ENCODE measurements at regions of chr12 and their contacts with region 1.

Region 1: DNA sequence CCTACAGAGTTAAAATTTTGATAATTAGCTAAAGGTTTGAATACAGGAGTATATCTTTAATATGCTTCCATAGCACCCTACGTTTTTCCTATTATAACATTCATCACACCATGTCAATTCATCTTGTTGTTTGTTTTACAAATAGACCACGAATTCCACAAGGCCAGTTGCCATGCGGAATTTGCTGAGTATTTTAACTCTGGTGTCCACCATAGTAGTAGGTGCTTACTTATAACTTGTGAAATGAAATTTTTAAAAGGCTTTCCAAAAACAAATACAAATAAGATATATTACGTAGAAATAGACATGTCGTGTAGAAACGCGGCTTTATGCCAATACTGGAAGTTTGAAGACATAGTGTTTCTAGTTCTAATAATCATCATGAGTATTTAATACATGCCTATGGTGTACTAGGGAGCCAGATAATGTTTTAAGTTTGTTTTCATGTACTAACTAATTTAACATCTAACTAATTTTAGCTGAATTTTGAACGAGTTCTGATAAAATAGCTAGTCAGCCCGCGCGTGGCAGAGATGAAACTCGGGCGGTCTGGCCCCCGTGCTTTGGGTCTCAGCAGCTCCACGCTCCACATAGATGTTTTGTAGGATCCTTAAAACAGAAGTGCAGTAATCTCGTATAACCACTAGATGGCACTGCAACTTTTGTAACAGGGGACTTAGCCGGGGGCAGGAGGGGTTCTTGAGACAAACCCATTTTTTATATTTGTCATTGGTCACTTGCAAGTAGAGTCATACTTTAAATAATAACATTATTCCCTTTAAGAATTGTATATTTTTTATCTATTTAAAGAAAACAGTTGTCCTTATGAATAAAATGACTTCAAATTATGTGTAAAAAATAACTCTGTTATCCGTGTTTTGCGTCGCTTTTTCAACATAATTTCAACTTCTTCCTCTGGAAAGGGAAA is 10.2 kb downstream of the CD69 start:
- DNase-seq: peak; percentile 63
- H3K4me3 Mint-ChIP-seq: peak overlapping the region; percentile 50
- H3K27ac Mint-ChIP-seq: peak overlapping the region; percentile 83
- H3K4me1 Mint-ChIP-seq: peaks cover 51% of the 10 kb centered on the region
- H3K27me3 Mint-ChIP-seq: no peaks in the 10 kb centered on the region

Region 2: GRCh38 chr12:7989827-7990551 is 1760.6 kb before region 1 on chr12:
- CTCF ChIA-PET with region 1: no interaction called
- POLR2A ChIA-PET with region 1: no interaction called
- intact Hi-C with region 1: no loop called
- DNase-seq: peak; percentile 90
- H3K4me3 Mint-ChIP-seq: peak overlapping the region; percentile 44
- H3K27ac Mint-ChIP-seq: peak overlapping the region; percentile 87
- H3K4me1 Mint-ChIP-seq: peaks cover 40% of the 10 kb centered on the region
- H3K27me3 Mint-ChIP-seq: no peaks in the 10 kb centered on the region

Region 3: DNA sequence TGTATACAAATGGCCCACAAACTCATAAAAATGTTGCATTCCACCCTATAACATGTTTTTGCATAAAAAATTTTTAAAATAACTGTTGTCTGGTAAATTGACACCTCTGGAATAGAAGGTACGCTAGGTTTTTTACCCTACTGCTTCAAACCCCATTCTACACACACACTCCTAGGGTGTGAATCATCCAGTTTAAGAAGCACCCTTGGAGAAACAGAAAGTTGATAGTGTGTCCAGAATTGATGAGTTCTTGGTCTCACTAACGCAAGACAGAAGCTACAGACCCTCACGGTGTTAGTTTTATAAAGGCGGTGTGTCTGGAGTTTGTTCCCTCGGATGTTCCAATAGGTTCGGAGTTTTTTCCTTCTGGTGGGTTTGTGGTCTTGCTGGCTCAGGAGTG is 301.4 kb before region 1 on chr12:
- CTCF ChIA-PET with region 1: no interaction called
- POLR2A ChIA-PET with region 1: no interaction called
- intact Hi-C with region 1: no loop called
- DNase-seq: no peak
- H3K4me3 Mint-ChIP-seq: peak overlapping the region; percentile 97
- H3K27ac Mint-ChIP-seq: no peak overlapping the region
- H3K4me1 Mint-ChIP-seq: peaks cover 13% of the 10 kb centered on the region
- H3K27me3 Mint-ChIP-seq: no peaks in the 10 kb centered on the region

Region 4: DNA sequence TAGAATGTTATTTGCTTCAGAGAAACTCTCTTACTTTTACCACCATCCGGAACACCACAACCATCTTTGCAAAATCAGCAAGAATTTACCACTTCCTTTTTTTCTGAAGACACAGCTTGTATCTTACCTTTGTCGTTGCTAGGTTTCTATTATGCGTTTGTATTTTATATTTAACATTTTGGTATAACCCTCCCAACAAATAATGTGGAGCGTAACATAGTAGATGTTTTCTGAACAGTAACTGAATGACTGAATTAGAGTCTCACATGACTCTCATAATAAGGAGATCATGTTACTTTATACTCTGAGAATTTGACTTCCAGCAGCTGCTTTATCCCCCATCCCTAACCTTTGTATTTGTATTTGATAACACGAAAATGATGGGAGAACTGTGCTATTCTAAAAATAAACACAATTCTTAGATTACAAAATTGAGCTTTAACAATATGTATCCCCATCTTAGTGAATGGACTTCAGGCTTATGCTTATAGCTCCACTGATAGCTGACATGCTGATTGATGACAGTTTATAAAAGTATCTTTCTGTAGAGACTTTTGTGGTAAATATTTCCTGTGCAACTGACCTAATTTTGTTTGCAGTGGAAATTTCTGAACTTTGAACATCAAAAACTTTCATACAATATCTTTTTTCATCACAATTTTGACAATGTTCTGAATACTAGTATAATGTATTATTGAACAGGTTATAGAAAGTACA is 135.0 kb before region 1 on chr12:
- CTCF ChIA-PET with region 1: no interaction called
- POLR2A ChIA-PET with region 1: no interaction called
- intact Hi-C with region 1: no loop called
- DNase-seq: no peak
- H3K4me3 Mint-ChIP-seq: peak overlapping the region; percentile 50
- H3K27ac Mint-ChIP-seq: peak overlapping the region; percentile 77
- H3K4me1 Mint-ChIP-seq: peaks cover 73% of the 10 kb centered on the region
- H3K27me3 Mint-ChIP-seq: no peaks in the 10 kb centered on the region

Region 5: DNA sequence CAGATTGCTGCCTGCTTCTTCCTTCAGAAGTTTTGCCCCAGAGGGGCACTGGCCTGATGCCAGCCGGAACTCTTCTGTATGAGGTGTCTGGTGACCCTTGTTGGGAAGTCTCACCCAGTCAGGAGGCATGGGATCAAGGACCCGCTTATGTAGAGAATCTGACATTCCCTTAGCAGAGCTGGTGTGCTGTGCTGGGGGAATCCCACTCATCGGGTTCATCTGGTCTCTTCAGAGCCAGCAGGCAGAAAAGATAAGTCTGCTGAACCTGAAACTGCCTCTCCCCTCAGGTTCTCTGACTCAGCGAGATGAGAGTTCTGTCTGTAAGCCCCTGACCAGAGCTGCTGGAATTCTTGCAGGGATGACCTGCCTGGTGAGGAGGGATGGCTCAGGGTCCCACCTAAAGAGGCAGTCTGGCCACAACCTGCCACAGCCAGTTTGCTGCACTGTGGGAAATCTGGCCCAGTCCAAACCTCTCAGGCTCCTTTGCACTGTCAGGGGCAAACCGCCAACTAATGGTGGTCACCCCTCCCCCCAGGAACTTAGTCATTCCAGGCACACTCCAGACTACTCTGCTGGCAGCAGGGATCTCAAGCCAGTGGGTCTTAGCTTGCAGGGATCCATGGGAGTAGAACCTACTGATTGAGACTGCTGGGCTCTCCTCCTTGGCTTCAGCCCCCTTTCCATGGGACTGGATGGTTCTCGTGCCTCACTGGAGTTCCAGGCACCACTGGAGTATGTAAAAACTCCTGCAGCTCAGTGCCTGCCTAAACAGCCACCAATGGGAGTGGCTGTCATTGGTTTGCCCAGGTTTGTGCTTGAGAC is 76.9 kb before region 1 on chr12:
- CTCF ChIA-PET with region 1: interaction called, 3 read pairs
- POLR2A ChIA-PET with region 1: interaction called, 277 read pairs
- intact Hi-C with region 1: no loop called
- DNase-seq: peak; percentile 88
- H3K4me3 Mint-ChIP-seq: peak overlapping the region; percentile 93
- H3K27ac Mint-ChIP-seq: peak overlapping the region; percentile 98
- H3K4me1 Mint-ChIP-seq: peaks cover 41% of the 10 kb centered on the region
- H3K27me3 Mint-ChIP-seq: no peaks in the 10 kb centered on the region

Region 6: GRCh38 chr12:9773216-9773877 is 22.8 kb after region 1 on chr12:
- CTCF ChIA-PET with region 1: interaction called, 18 read pairs
- POLR2A ChIA-PET with region 1: no interaction called
- intact Hi-C with region 1: no loop called
- DNase-seq: no peak
- H3K4me3 Mint-ChIP-seq: peak overlapping the region; percentile 7
- H3K27ac Mint-ChIP-seq: peak overlapping the region; percentile 55
- H3K4me1 Mint-ChIP-seq: peaks cover 88% of the 10 kb centered on the region
- H3K27me3 Mint-ChIP-seq: no peaks in the 10 kb centered on the region

Region 7: DNA sequence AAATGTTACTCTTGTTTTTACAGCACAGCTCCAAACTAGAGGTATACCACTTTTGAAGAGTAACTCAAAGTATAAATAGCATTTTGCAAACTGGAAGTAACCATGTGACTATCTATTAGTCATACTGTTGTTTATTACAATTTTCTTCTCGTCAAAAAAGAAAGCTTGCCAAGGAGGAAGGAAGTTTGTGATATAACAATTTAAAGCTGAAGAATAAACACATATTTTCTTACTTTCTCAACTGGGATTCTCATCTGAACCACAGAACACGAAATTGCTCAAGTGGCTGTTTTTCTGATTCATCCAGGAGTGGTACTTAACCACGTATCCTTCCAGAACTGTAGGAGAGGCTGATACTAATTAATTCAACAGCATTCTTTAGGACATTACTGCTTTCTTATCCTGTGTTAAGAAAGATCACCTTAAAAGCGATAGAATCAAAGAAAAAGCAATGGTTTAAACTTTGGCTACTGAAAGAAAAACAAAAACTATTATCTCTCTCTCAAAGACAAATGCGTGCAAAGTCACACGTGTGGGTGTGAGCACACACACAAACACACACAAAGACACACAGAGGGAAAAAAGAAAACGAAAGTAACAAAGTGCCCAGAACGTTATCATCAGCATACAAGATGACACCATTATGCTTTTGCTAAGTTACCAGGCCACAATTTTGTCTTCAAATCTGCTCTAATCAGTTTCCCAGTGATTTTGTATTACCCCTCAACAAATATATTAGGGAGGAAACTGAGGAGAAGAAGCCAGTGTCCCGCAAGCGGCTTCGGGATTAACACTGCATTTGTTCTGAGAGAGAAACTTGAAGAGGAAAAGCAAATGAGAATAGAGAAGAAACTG is 119.0 kb after region 1 on chr12 and contains the start of gene CLEC2B:
- CTCF ChIA-PET with region 1: interaction called, 23 read pairs
- POLR2A ChIA-PET with region 1: interaction called, 214 read pairs
- intact Hi-C with region 1: loop called (anchors 2 kb)
- DNase-seq: peak; percentile 41
- H3K4me3 Mint-ChIP-seq: peak within 1 kb of the TSS; percentile 82
- H3K27ac Mint-ChIP-seq: peak within 1 kb of the TSS; percentile 93
- H3K4me1 Mint-ChIP-seq: peaks cover 19% of the 10 kb centered on the region
- H3K27me3 Mint-ChIP-seq: no peaks in the 10 kb centered on the region
- total RNA-seq, gene CLEC2B: 12.6 to 13.7 TPM

Region 8: GRCh38 chr12:9940375-9940774 is 189.8 kb after region 1 on chr12:
- CTCF ChIA-PET with region 1: interaction called, 16 read pairs
- POLR2A ChIA-PET with region 1: no interaction called
- intact Hi-C with region 1: no loop called
- DNase-seq: no peak
- H3K4me3 Mint-ChIP-seq: no peak overlapping the region
- H3K27ac Mint-ChIP-seq: no peak overlapping the region
- H3K4me1 Mint-ChIP-seq: peaks cover 16% of the 10 kb centered on the region
- H3K27me3 Mint-ChIP-seq: peaks cover 4% of the 10 kb centered on the region

Measured in activated CD4-positive, alpha-beta memory T cell treated with anti-CD3 and anti-CD28 coated beads for 36 hours (primary cell).